GM12878 (cell line): ENCODE measurements at regions of chr2 and their contacts with region 1.

Region 1: GRCh38 chr2:185738679-185739472 is at the start of gene FSIP2:
- DNase-seq: no peak
- ATAC-seq: peak; percentile 98
- H3K4me3 ChIP-seq: no peak within 1 kb of the TSS
- H3K27ac ChIP-seq: no peak within 1 kb of the TSS
- H3K4me1 ChIP-seq: no peaks in the 10 kb centered on the region
- H3K27me3 ChIP-seq: no peaks in the 10 kb centered on the region; a peak in 1 of 4 replicates
- CTCF ChIP-seq: peak; percentile 68 to 89 (median 77)
- EP300 ChIP-seq: no peak
- POLR2A ChIP-seq: no peak
- RAD21 ChIP-seq: peak; percentile 73
- polyA plus RNA-seq, gene FSIP2: 0.04 to 0.13 TPM

Region 2: DNA sequence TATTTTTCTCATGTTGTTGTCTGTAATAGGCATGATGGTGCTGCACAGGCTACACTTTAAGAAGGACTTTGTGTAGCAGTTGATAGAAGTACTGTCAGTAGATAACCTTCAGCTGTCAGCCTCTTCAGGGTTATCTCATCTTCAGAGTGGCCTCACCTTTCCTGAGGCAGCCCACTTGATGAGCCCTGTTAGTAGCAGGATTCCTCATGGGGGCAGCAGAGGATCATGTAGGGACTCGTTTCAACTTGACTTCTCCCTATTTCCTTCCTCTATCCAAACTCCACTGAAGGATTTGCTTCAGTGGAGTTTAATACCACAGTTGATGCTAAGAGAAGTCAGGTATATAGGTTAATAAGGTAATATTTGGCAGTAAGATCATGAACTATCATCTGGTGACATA is 530.6 kb before region 1 on chr2:
- CTCF ChIA-PET with region 1: interaction called, 5 read pairs
- POLR2A ChIA-PET with region 1: no interaction called
- RAD21 ChIA-PET with region 1: no interaction called
- SMC1A ChIA-PET with region 1: interaction called, 3 read pairs
- in situ Hi-C with region 1: no loop called
- intact Hi-C with region 1: loop called (anchors 10 kb)
- DNase-seq: no peak
- ATAC-seq: peak; percentile 76
- H3K4me3 ChIP-seq: no peak overlapping the region
- H3K27ac ChIP-seq: no peak overlapping the region
- H3K4me1 ChIP-seq: no peaks in the 10 kb centered on the region
- H3K27me3 ChIP-seq: no peaks in the 10 kb centered on the region
- CTCF ChIP-seq: peak; percentile 31 to 51 (median 46); a peak in 5 of 6 replicates
- EP300 ChIP-seq: no peak
- POLR2A ChIP-seq: no peak
- RAD21 ChIP-seq: peak; percentile 54

Region 3: GRCh38 chr2:185970148-185970852 is 231.4 kb after region 1 on chr2:
- CTCF ChIA-PET with region 1: no interaction called
- POLR2A ChIA-PET with region 1: no interaction called
- RAD21 ChIA-PET with region 1: no interaction called
- SMC1A ChIA-PET with region 1: no interaction called
- in situ Hi-C with region 1: no loop called
- intact Hi-C with region 1: no loop called
- DNase-seq: no peak
- ATAC-seq: no peak
- H3K4me3 ChIP-seq: no peak overlapping the region
- H3K27ac ChIP-seq: no peak overlapping the region
- H3K4me1 ChIP-seq: no peaks in the 10 kb centered on the region
- H3K27me3 ChIP-seq: no peaks in the 10 kb centered on the region
- CTCF ChIP-seq: no peak
- EP300 ChIP-seq: no peak
- POLR2A ChIP-seq: no peak
- RAD21 ChIP-seq: no peak